Psoas muscle (tissue), 8 donors: ENCODE measurements at regions of chr17 and their contacts with region 1.

Region 1: GRCh38 chr17:82020891-82021727 is 1.6 kb downstream of the CENPX start:
- DNase-seq: peak; percentile 74 to 90
- ATAC-seq: peak; percentile 23 to 55 (median 38)
- H3K4me3 ChIP-seq: peak overlapping the region; percentile 91
- H3K27ac ChIP-seq: no peak overlapping the region
- H3K4me1 ChIP-seq: peaks cover 48% of the 10 kb centered on the region
- H3K27me3 ChIP-seq: no peaks in the 10 kb centered on the region
- CTCF ChIP-seq: peak; percentile 77

Region 2: DNA sequence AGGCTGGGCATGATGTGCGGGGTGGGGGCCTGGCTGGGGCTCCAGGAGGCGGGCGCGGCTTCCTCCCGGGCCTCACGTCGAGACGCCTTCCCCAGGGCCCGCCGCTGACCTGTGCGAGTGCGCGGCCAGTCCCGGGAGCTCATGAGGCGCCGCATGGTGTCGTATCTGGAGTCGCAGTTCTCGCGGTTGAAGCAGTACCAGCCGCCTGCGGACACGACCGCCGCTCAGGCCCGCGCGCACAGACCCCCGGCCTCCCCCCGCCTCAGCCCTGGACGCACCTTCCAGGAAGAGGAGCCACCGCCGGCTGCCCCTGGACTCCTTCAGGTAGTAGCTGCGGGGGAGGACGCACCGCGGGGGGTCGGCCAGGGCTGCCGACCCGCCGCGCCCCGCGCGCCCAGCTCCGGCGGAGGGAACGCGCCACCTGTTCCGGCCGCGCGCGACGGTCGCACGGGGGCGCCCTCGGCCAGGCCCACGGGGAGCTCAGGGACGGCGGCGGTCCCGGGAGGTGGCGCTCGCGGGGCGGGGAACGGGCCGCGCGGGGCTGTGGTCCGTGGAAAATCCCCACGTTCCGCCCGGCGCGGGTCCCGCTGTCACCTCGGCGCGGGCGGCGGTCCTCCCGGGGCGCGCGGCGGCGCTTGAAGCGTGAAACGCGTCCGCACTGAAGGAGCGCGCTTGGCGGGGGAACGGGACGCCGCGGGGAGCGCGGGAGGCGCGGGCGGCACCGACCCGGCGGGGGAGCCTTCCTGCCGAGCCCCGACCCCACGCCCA is 61.6 kb before region 1 on chr17:
- intact Hi-C with region 1: loop called (anchors 1 to 2 kb)
- DNase-seq: peak; percentile 75 to 88
- ATAC-seq: peak; percentile 82 to 87 (median 84)
- H3K4me3 ChIP-seq: peak overlapping the region; percentile 66
- H3K27ac ChIP-seq: no peak overlapping the region
- H3K4me1 ChIP-seq: peaks cover 27% of the 10 kb centered on the region
- H3K27me3 ChIP-seq: peaks cover 0 to 23% (median 3%) of the 10 kb centered on the region in 3 donors
- CTCF ChIP-seq: peak; percentile 90

Region 3: DNA sequence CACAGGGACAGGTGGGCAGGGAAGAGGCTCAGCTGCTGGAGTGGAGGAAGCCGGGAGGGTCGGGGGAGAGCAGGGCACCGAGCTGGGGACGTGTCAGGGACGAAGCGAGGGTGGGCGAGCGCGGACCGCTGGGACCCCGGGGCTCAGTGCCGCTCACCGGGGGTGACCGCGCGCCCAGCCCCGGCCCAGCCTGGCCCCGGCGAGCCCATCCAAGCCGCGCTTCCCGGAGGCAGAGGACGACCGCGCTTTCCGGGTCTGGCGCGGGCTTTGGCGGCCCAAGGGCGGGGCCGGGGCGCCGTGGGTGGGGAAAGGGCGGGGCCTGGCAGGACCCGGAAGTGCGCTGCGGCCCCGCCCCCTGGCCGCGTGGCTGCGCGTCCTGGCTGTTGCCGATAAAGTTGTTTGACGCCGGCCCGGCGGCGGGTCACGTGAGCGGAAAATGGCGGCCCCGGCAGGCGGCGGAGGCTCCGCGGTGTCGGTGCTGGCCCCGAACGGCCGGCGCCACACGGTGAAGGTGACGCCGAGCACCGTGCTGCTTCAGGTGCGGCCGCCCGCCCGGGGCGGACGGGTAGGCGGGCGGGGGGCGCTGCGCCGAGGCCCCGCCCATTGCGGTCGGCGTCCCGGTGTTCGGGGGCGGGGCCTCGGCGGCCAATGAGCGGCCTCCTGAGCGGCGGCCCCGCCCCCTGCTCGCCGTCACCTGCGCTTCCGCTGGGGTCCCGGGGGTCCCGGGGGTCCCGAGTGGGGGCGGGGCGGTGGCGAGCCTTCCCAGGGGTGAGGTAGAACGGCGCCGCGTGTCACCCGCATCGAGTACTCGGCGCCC is 43.7 kb before region 1 on chr17 and contains the start of gene ASPSCR1:
- intact Hi-C with region 1: loop called in 1 of 2 experiments (anchors 5 kb)
- DNase-seq: peak; percentile 93 to 97
- ATAC-seq: peak; percentile 95 to 97 (median 96)
- H3K4me3 ChIP-seq: peak within 1 kb of the TSS; percentile 78
- H3K27ac ChIP-seq: peak within 1 kb of the TSS; percentile 96
- H3K4me1 ChIP-seq: peaks cover 9% of the 10 kb centered on the region
- H3K27me3 ChIP-seq: no peaks in the 10 kb centered on the region
- CTCF ChIP-seq: no peak
- total RNA-seq, gene ASPSCR1: 27.7 to 37.4 (median 35.0) TPM